CD4-positive, alpha-beta T cell (primary cell): ENCODE measurements at regions of chr16 and their contacts with region 1.

Region 1: GRCh38 chr16:14249291-14250032 is 178.3 kb downstream of the MRTFB start:
- DNase-seq: peak; percentile 11 to 69 (median 37)
- ATAC-seq: no peak
- H3K4me3 ChIP-seq: no peak overlapping the region
- H3K4me3 Mint-ChIP-seq: no peak overlapping the region
- H3K27ac ChIP-seq: no peak overlapping the region
- H3K27ac Mint-ChIP-seq: no peak overlapping the region
- H3K4me1 ChIP-seq: no peaks in the 10 kb centered on the region
- H3K4me1 Mint-ChIP-seq: no peaks in the 10 kb centered on the region
- H3K27me3 ChIP-seq: no peaks in the 10 kb centered on the region
- H3K27me3 Mint-ChIP-seq: no peaks in the 10 kb centered on the region
- CTCF ChIP-seq: peak; percentile 90

Region 2: GRCh38 chr16:14529010-14529669 is 279.7 kb after region 1 on chr16:
- CTCF ChIA-PET with region 1: interaction called, 3 read pairs
- POLR2A ChIA-PET with region 1: no interaction called
- intact Hi-C with region 1: loop called (anchors 1 kb)
- DNase-seq: peak; percentile 24 to 76 (median 42)
- ATAC-seq: peak; percentile 48
- H3K4me3 ChIP-seq: no peak overlapping the region
- H3K4me3 Mint-ChIP-seq: no peak overlapping the region
- H3K27ac ChIP-seq: no peak overlapping the region
- H3K27ac Mint-ChIP-seq: no peak overlapping the region
- H3K4me1 ChIP-seq: peaks cover 2% of the 10 kb centered on the region
- H3K4me1 Mint-ChIP-seq: no peaks in the 10 kb centered on the region
- H3K27me3 ChIP-seq: no peaks in the 10 kb centered on the region
- H3K27me3 Mint-ChIP-seq: no peaks in the 10 kb centered on the region
- CTCF ChIP-seq: peak; percentile 69

Region 3: DNA sequence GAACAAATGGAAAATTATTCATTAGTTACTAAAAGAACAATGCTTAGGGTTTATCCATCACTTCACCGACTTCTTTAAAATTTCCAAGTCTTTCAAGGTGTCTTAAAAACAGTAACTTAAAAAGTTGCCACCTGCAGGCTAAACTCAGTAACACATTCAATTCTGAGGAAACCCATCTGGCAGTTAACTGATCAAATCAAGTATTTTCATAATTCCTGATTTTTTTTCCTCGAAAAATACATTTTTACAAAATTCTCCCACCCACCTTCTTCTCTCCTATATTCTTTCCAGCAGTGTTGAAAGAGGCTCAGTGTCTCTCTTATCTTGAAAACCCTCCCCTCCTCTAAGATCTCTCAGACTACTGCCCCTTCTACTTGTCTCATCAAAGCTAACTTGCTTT is 350.7 kb after region 1 on chr16:
- CTCF ChIA-PET with region 1: interaction called, 6 read pairs
- POLR2A ChIA-PET with region 1: no interaction called
- intact Hi-C with region 1: loop called (anchors 1 to 2 kb)
- DNase-seq: peak in 3 of 14 experiments; percentile 14 to 35 (median 31)
- ATAC-seq: no peak
- H3K4me3 ChIP-seq: no peak overlapping the region
- H3K4me3 Mint-ChIP-seq: no peak overlapping the region
- H3K27ac ChIP-seq: no peak overlapping the region
- H3K27ac Mint-ChIP-seq: no peak overlapping the region
- H3K4me1 ChIP-seq: no peaks in the 10 kb centered on the region
- H3K4me1 Mint-ChIP-seq: no peaks in the 10 kb centered on the region
- H3K27me3 ChIP-seq: no peaks in the 10 kb centered on the region
- H3K27me3 Mint-ChIP-seq: no peaks in the 10 kb centered on the region
- CTCF ChIP-seq: peak; percentile 31